Endothelial cell of umbilical vein (primary cell): ENCODE measurements at regions of chr17 and their contacts with region 1.

Region 1: DNA sequence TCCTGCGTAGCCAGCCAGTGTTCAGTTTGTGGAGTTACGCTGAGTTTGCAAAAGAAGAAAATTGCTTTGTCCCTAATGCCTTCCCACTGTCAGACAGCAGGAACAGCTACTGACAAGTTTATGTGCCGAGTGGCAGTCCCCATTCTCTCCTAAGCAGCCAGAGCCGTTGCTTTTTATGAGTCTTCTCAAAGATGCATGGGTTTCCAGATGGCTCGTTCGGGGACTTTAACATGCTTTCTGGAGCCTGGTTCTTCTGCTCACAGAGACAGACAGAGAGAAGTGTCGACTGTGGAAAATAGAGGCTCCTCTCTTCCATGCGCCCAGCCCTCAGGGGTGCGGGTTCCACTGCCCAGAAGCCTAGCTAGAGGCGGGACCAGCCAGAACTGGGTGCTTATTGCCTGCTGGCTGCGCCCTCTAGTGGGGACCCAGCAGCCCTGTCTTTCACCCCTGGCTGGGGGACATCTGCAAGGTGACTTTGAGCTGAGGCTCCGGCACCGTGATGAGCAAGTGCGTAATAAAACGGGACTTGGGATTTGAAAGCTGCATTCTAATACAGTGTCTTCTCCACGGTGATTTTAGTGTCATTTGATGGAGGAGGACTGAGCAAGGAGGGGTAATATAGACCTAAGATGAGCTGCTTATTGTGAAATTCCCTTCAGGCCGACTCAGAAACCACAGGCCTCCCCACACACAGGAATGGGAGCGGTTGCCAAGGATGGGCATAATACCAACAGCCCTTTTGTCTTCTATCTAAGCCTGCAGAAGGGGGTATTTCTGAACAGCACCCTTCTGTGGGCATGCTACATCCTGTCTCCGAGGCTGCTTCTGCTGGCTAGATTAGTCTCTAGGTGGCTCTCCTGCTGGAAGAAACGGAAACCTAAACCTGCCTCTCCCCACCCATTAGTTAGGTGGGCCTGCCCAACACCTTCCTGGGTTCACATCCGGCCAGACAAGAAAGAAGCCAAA is 73.1 kb downstream of the CCDC182 start:
- DNase-seq: peak; percentile 55
- H3K4me3 ChIP-seq: no peak overlapping the region
- H3K27ac ChIP-seq: no peak overlapping the region
- H3K4me1 ChIP-seq: no peaks in the 10 kb centered on the region
- H3K27me3 ChIP-seq: no peaks in the 10 kb centered on the region
- CTCF ChIP-seq: peak; percentile 91 to 94
- POLR2A ChIP-seq: no peak

Region 2: DNA sequence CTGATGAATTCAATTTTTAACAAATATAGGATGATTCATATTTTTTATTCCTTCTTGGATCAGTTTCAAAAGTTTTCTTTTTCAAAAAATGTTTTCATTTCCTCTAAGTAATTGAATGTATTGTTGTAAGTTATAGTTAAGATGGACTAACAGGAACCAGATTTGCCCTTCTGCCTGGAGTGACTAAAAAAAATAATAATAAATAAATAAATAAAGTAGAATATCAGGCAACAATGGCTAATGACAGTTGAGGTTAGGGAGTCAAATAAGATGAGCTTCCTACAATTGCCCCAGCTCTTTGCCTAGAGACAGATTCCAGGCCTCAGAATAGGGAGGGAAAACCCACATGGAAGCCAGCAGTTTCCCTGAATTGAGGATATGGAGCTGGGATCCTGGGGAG is 489.3 kb before region 1 on chr17:
- CTCF ChIA-PET with region 1: interaction called, 12 read pairs
- POLR2A ChIA-PET with region 1: no interaction called
- dilution Hi-C with region 1: no loop called
- intact Hi-C with region 1: no loop called
- DNase-seq: peak; percentile 44
- H3K4me3 ChIP-seq: no peak overlapping the region
- H3K27ac ChIP-seq: no peak overlapping the region
- H3K4me1 ChIP-seq: peaks cover 5% of the 10 kb centered on the region
- H3K27me3 ChIP-seq: no peaks in the 10 kb centered on the region
- CTCF ChIP-seq: no peak
- POLR2A ChIP-seq: no peak

Region 3: DNA sequence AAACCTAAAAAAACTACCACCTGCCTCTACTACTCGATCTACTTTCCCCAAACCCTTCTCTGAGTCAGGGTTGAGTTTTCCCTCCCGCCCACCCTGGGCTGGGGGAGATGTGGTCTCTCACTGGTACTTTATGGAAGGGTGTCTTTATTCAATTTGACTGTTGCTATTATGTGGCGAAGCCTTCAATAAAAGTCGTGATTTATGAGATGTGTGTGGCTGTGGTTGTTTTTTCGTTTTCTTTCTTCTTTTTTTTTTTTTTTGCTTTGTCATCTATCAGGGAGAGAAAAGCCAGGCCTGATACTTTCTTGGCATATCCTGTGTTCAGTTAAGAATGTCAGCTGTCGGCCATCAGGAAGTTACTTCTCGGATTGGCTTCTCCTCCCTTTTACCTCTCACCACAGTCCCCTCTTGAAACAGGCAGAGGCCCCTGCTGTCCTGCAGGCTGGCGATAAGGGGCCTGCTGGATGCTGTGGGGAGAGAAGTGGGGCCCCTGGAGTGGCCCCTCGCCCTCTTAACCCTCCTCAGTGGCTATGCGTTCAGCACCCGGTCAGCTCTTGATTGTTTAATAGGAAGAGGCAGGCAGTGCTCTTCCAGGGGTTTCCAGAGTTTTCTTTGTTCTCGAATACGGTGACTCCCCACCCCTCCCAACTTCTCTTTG is 292.6 kb before region 1 on chr17:
- CTCF ChIA-PET with region 1: no interaction called
- POLR2A ChIA-PET with region 1: no interaction called
- dilution Hi-C with region 1: no loop called
- intact Hi-C with region 1: no loop called
- DNase-seq: peak; percentile 67
- H3K4me3 ChIP-seq: no peak overlapping the region
- H3K27ac ChIP-seq: peak overlapping the region; percentile 33
- H3K4me1 ChIP-seq: peaks cover 5% of the 10 kb centered on the region
- H3K27me3 ChIP-seq: no peaks in the 10 kb centered on the region
- CTCF ChIP-seq: no peak
- POLR2A ChIP-seq: no peak

Region 4: GRCh38 chr17:57455063-57455914 is 216.7 kb before region 1 on chr17:
- CTCF ChIA-PET with region 1: no interaction called
- POLR2A ChIA-PET with region 1: no interaction called
- dilution Hi-C with region 1: no loop called
- intact Hi-C with region 1: no loop called
- DNase-seq: no peak
- H3K4me3 ChIP-seq: no peak overlapping the region
- H3K27ac ChIP-seq: no peak overlapping the region
- H3K4me1 ChIP-seq: no peaks in the 10 kb centered on the region
- H3K27me3 ChIP-seq: no peaks in the 10 kb centered on the region
- CTCF ChIP-seq: no peak
- POLR2A ChIP-seq: no peak

Region 5: DNA sequence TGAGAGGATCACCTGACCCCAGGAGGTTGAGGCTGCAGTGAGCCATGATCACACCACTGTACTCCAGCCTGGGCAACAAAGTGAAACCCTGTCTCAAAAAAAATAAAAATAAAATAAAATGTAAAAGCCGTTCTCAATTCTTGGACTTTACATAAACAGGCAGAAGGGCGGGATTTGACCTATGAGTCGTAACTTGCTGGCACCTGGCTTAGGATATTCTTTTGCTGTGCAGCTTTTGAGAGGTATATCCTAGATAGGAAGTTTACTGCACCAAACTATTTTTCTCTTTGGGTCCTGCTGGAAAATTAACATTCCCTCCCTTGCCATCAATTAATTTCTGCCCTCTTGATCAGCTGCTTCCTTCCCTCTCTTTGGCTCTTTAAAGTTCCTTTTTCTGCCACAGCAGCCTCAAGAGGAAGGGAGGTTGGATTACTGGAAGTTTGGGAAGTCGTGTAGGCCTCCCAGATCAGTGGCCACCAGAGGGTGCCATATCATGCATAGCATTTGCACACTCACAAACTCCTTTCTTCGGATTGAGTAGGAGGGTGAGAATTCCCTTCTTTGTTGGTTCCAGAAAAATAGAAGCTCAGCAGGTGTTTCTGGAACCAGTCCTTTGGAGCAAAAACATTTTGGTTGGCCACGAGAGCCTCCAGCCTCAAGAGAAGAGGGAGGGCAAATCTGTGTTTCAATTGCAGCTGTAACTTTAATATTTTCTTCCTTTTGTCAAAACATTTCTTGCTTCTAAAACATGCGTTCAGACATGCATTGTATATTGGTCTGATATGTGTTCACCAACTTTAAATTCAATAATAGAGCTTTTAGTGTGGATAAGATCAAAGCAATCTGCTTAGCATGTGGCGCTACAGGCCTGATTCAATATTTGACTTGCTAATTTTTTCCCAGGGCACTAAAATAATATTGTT is 74.2 kb before region 1 on chr17:
- CTCF ChIA-PET with region 1: interaction called, 120 read pairs
- POLR2A ChIA-PET with region 1: no interaction called
- dilution Hi-C with region 1: no loop called
- intact Hi-C with region 1: loop called (anchors 1 kb)
- DNase-seq: peak; percentile 67
- H3K4me3 ChIP-seq: no peak overlapping the region
- H3K27ac ChIP-seq: no peak overlapping the region
- H3K4me1 ChIP-seq: no peaks in the 10 kb centered on the region
- H3K27me3 ChIP-seq: peaks cover 7 to 9% of the 10 kb centered on the region in 2 experiments
- CTCF ChIP-seq: peak; percentile 78 to 79
- POLR2A ChIP-seq: no peak

Region 6: GRCh38 chr17:57645950-57646665 is 25.8 kb before region 1 on chr17:
- CTCF ChIA-PET with region 1: interaction called, 10 read pairs
- POLR2A ChIA-PET with region 1: no interaction called
- dilution Hi-C with region 1: no loop called
- intact Hi-C with region 1: no loop called
- DNase-seq: no peak
- H3K4me3 ChIP-seq: no peak overlapping the region
- H3K27ac ChIP-seq: no peak overlapping the region
- H3K4me1 ChIP-seq: no peaks in the 10 kb centered on the region
- H3K27me3 ChIP-seq: no peaks in the 10 kb centered on the region
- CTCF ChIP-seq: no peak
- POLR2A ChIP-seq: no peak